Right cardiac atrium (tissue), 5 donors: ENCODE measurements at regions of chr20 and their contacts with region 1.

Region 1: GRCh38 chr20:20664795-20665589 is 47.5 kb downstream of the RALGAPA2 start:
- DNase-seq: no peak
- ATAC-seq: peak; percentile 84 to 88
- H3K4me3 ChIP-seq: no peak overlapping the region
- H3K27ac ChIP-seq: no peak overlapping the region
- H3K4me1 ChIP-seq: no peaks in the 10 kb centered on the region
- H3K27me3 ChIP-seq: no peaks in the 10 kb centered on the region

Region 2: DNA sequence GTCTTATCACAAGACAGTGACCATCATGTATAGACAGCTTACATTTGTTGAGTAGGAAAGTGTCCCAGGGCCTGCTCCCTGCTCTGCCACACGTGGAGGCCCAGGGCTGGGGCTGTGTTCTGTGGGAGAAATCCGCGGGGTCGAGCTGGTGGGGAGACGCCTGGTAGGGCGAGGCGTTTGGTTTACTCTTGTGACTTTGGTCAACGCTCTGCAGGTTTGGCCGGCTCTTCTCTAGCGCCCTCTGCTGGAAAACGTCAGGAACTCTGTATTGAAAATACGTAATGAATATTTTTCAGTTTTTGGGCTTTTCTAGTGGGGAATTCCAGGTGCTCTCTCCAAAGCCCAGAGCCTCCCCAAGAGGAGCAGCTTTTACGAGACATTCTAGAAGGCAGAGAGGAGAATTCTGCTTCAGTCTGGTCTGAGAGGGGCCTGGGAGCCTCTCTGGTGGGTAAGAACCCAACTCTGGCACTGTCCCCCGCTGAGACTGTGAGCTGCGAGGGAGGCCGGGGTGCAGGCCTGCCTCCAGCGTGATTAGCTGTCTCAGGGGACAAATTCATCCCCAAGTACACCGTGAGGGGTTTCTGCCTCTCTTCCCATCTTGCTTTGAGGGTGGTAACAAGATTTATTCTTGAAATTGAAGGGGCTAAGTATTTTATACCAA is 160.1 kb after region 1 on chr20:
- intact Hi-C with region 1: loop called (anchors 1 to 5 kb)
- DNase-seq: peak; percentile 63 to 82 (median 78)
- ATAC-seq: peak; percentile 75 to 83
- H3K4me3 ChIP-seq: peak overlapping the region; percentile 5
- H3K27ac ChIP-seq: no peak overlapping the region
- H3K4me1 ChIP-seq: peaks cover 4% of the 10 kb centered on the region
- H3K27me3 ChIP-seq: no peaks in the 10 kb centered on the region